ENCODE measurements at regions of chr12 and their contacts with region 1.

Region 1: DNA sequence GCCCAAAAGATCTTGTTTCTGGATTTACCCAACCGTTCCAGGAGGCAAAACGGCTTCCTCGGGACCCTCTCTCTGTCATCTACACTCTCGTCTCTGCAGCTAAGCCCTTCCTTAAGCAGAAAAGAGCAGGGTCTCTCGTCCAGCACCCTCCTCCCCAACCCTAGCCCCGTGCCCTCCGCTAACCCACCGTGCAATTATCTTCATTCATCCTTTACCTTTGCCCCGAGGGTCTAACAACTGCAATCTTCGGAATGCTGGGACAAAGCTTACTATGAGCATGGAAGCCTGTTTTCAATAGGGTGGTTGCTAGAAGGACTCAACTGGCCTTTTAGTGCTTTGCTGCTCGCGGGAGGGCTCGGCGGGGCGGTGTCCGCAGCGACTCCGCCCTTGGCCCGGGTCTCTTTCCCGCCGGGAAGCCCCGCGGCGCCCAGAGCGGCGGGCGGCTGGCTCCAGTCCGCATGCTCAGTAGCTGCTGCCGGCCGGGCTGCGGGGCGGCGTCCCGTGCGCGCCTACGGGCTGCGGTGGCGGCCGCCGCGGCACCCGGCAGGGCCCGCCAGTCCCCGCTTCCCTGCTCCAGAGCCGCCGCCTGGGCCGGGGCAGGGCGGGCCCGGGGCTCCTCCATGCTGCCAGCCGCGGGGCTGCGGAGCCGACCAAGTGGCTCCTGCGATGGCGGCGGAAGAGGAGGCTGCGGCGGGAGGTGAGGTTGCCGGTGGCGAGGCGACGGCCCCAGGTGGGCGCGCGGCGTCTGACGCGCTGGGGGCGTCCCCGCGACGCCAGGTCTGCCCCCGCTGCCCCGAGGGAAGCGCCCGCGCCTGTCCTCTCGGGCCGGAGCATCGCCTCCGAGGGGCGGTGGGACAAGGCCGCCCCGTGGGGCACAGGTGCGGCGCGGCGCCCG is at the start of gene BMAL2:
- DNase-seq: peak; percentile 79
- ATAC-seq: peak; percentile 6
- H3K4me3 ChIP-seq: peak within 1 kb of the TSS; percentile 83
- H3K27ac ChIP-seq: peak within 1 kb of the TSS; percentile 95
- H3K4me1 ChIP-seq: peaks cover 65% of the 10 kb centered on the region
- H3K27me3 ChIP-seq: no peaks in the 10 kb centered on the region
- CTCF ChIP-seq: no peak
- total RNA-seq, gene BMAL2: 126 and 137 TPM in 2 replicates

Region 2: GRCh38 chr12:27343255-27344000 is 10.8 kb after region 1 on chr12:
- CTCF ChIA-PET with region 1: interaction called, 4 read pairs
- POLR2A ChIA-PET with region 1: interaction called, 4 read pairs
- intact Hi-C with region 1: loop called (anchors 1 kb)
- DNase-seq: peak; percentile 99
- ATAC-seq: peak; percentile 86
- H3K4me3 ChIP-seq: peak overlapping the region; percentile 53
- H3K27ac ChIP-seq: peak overlapping the region; percentile 93
- H3K4me1 ChIP-seq: peaks cover 81% of the 10 kb centered on the region
- H3K27me3 ChIP-seq: no peaks in the 10 kb centered on the region
- CTCF ChIP-seq: no peak

Region 3: GRCh38 chr12:27383429-27384260 is 51.0 kb after region 1 on chr12:
- CTCF ChIA-PET with region 1: interaction called, 3 read pairs
- POLR2A ChIA-PET with region 1: interaction called, 3 read pairs
- intact Hi-C with region 1: loop called (anchors 1 kb)
- DNase-seq: peak; percentile 98
- ATAC-seq: peak; percentile 86
- H3K4me3 ChIP-seq: no peak overlapping the region
- H3K27ac ChIP-seq: peak overlapping the region; percentile 72
- H3K4me1 ChIP-seq: peaks cover 24% of the 10 kb centered on the region
- H3K27me3 ChIP-seq: no peaks in the 10 kb centered on the region
- CTCF ChIP-seq: peak; percentile 98

Region 4: GRCh38 chr12:27652174-27652763 is 319.6 kb after region 1 on chr12:
- CTCF ChIA-PET with region 1: no interaction called
- POLR2A ChIA-PET with region 1: no interaction called
- intact Hi-C with region 1: loop called (anchors 10 kb)
- DNase-seq: peak; percentile 97
- ATAC-seq: peak; percentile 96
- H3K4me3 ChIP-seq: no peak overlapping the region
- H3K27ac ChIP-seq: peak overlapping the region; percentile 21
- H3K4me1 ChIP-seq: peaks cover 7% of the 10 kb centered on the region
- H3K27me3 ChIP-seq: no peaks in the 10 kb centered on the region
- CTCF ChIP-seq: peak; percentile 99